Posterior vena cava (tissue), 2 donors: ENCODE measurements at regions of chr17 and their contacts with region 1.

Region 1: DNA sequence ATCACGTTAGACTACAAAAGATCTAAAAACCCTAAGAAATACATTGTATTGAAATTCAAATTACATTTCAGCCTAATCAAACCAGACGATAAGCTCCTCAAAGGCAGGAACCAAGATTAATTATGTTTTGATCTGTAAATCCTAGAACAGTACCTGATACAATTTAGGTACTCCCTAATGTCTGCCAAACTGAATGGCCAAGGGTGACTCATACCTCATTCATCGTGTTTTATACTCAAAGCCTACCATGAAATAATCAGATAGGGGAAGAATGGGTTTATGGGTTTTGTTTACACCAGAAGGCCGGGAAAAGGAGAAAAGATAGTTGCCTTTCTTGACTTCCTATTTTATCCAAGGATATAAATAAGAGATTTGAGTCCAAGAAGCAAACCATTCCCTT is 19.3 kb downstream of the MMD start:
- DNase-seq: no peak

Region 2: DNA sequence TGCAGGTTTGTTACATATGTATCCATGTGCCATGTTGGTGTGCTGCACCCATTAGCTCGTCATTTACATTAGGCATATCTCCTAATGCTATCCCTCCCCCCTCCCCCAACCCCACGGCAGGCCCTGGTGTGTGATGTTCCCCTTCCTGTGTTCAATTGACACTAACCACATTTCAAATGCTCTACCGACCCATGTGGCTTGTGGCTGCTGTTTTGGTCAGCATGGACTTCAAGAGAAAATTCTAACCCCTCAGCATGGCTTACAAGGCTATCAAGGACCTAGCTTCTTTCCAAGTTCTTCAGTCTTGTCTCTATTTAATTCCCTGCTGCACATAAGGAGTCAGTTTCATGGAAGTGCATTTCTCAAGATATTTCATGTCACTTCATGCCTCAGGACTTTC is 33.7 kb before region 1 on chr17:
- intact Hi-C with region 1: loop called in 1 of 2 experiments (anchors 1 kb)
- DNase-seq: no peak

Region 3: DNA sequence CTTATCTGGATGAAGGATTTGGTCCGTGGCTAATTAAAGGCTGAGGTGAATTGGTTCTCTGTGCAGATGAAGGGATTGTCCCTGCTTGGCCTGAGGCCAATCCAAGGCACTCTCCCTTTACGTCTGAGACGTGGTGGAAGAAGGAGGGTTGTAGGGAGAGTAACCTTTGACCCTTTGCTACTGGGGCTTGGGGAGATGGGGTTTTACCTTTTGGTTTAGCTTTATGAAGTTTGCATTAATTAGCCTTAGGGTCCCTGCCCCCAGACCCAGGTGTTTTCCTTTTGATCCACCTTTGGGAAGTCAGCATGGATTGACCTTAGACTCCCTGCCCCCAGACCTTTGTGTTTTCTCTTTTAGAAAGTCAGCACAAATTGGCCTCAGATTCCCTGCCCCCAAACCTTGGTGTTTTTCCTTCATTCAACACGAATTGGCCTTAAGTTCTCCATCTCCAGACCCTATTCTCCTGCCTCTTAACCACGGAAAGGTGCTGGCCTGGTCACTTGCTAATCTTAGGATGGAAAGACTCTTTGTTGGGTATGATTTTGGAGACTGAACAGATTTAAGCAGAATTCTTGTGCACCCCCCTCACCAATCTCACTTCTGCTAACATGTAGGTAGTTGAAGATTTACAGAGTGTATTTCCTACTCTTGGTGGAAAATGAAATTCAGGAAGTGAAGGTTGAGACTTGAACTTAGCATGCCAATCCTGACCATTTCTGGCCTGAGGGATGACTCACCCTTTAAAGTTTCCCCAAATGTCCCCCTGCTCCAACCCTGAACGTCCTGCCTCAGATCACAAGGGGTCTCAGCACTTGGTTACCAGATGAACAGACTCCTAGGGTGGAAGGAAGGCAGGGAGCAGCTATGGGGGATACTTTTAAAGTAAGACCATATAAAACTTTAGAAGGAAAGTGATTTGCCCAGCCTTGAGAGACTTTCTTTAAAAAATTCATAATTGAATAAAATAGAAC is 42.4 kb after region 1 on chr17:
- intact Hi-C with region 1: no loop called
- DNase-seq: no peak